Activated T-helper 2 cell treated with anti-CD3 and anti-CD28 coated beads, Interferon-gamma antibody, Interleukin-2, Interleukin-4, amounts not matched to agents 10 μg/mL and 5 μg/mL and 100 μg/mL, durations not matched to agents 14 hours and 24 hours and 36 hours (primary cell): ENCODE measurements at regions of chr15 and their contacts with region 1.

Region 1: DNA sequence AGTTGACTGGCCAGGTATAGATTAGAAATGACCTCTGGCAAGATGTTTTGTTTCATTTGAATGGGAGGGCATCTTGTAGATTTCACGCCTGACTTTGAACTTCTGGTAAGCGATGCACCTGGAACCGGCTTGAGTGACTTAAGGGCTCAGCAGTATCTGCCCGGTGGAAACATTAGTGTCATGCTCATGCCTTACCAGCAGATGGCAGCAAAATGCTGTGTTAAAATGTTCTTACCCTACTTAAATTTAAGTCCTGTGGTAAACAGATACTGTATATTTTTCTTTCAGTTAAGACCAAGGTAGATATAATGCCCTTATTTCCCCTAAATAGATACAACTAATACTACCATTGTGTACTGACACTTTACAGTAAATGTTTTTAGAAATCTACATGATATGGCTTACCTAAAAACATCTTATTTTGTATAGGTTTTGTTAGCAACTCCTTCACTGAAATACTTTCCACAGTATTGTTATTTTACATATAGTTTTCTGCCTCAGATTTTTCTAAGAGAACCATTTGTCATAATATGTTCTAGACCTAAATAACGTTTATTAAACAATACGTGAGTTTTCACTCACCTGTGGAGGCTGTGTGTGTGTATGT is 25.5 kb downstream of the ASB7 start:
- DNase-seq: peak; percentile 37
- H3K4me3 Mint-ChIP-seq: no peak overlapping the region
- H3K27ac Mint-ChIP-seq: no peak overlapping the region
- H3K4me1 Mint-ChIP-seq: peaks cover 4% of the 10 kb centered on the region
- H3K27me3 Mint-ChIP-seq: no peaks in the 10 kb centered on the region

Region 2: GRCh38 chr15:100500226-100500990 is 127.5 kb before region 1 on chr15:
- intact Hi-C with region 1: no loop called
- DNase-seq: no peak
- H3K4me3 Mint-ChIP-seq: no peak overlapping the region
- H3K27ac Mint-ChIP-seq: no peak overlapping the region
- H3K4me1 Mint-ChIP-seq: no peaks in the 10 kb centered on the region
- H3K27me3 Mint-ChIP-seq: peaks cover 8% of the 10 kb centered on the region

Region 3: DNA sequence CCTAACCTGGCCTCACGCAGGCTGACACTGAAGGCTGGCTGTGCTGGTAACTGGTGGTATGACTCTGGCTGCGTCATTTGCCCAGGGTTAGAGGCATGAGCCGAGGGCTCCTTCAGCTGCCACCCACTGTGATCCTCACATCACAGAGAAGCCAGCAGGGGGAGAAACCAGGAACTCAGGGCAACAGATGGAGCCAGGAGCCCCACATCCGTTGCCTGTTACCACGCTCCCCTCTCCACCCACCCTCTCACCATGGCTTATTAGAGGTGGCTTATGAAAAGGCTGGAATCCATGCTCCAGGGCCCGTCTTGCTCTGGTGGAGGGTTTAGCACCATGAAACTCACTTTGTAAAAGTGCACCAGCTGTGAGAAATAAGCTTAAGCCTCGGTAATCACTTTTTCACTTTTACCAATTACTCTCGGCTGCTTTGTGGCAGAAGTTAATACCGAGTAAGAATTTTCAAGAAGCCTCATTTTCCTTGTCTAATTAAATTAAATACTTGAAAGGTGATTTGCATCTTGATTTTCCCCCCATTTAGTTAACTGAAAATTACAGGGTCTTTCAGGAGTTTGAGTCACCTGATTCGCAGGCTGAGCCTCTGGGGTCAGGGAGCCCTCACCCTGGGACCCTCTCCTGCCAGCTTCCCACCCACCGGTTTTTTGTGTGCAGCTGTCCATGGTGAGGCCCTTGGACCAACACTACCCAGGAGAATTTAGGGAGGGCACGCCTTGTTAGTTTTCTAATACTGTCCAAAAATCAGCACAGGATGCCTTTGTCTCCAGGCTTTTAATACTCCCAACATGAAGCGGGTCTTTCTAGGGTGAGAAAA is 35.4 kb after region 1 on chr15:
- intact Hi-C with region 1: no loop called
- DNase-seq: no peak
- H3K4me3 Mint-ChIP-seq: no peak overlapping the region
- H3K27ac Mint-ChIP-seq: no peak overlapping the region
- H3K4me1 Mint-ChIP-seq: no peaks in the 10 kb centered on the region
- H3K27me3 Mint-ChIP-seq: peaks cover 10% of the 10 kb centered on the region

Region 4: GRCh38 chr15:100873029-100873677 is 245.3 kb after region 1 on chr15:
- intact Hi-C with region 1: loop called (anchors 1 kb)
- DNase-seq: peak; percentile 19
- H3K4me3 Mint-ChIP-seq: no peak overlapping the region
- H3K27ac Mint-ChIP-seq: no peak overlapping the region
- H3K4me1 Mint-ChIP-seq: no peaks in the 10 kb centered on the region
- H3K27me3 Mint-ChIP-seq: peaks cover 36% of the 10 kb centered on the region

Region 5: DNA sequence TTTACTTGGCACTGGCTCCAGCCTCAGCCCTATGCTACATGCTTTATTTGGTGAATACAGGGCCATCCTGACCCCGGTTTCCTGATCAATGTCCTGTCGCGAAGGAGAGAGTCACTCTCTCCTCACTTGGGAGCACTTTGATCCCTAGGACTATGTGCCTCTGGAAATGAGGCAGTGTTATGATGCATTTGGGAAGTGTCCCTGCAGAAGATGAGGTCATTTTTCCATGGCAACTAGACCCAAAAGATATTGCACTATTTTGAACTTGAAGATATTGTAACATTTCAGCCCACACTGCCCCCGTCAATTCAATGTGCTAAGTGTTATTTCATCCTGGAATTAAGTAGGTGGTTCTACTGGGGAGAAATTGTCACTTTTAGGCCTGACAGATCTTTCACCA is 359.3 kb after region 1 on chr15:
- intact Hi-C with region 1: no loop called
- DNase-seq: no peak
- H3K4me3 Mint-ChIP-seq: no peak overlapping the region
- H3K27ac Mint-ChIP-seq: no peak overlapping the region
- H3K4me1 Mint-ChIP-seq: no peaks in the 10 kb centered on the region
- H3K27me3 Mint-ChIP-seq: peaks cover 36% of the 10 kb centered on the region

Region 6: GRCh38 chr15:101006934-101007691 is 379.2 kb after region 1 on chr15:
- intact Hi-C with region 1: loop called (anchors 1 kb)
- DNase-seq: peak; percentile 45
- H3K4me3 Mint-ChIP-seq: peak overlapping the region; percentile 86
- H3K27ac Mint-ChIP-seq: no peak overlapping the region
- H3K4me1 Mint-ChIP-seq: peaks cover 14% of the 10 kb centered on the region
- H3K27me3 Mint-ChIP-seq: peaks cover 12% of the 10 kb centered on the region